ENCODE measurements at regions of chr2 and their contacts with region 1.

Region 1: DNA sequence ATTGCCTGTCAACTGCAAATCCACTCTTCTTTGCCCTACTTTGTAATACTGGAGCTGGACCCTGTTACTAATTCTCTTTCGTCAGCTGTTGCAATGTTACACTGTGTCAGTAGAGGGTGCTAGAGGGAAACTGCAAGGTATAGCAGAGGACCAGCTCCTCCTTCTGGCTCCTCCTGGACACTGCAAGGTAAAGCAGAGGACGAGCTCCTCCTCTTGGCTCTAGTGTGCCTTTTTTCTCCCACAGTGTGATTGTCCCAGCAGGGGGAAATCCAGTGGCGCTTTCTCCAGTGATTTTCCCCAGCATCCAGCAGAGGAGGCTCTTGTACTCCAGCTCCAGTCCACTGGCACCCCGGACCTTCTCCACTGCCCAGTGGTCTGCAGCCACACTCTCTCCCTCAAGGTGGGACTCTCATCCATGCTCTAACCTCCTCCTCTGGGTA is 95.6 kb downstream of the CAPN13 start:
- DNase-seq: peak; percentile 91
- H3K4me3 Mint-ChIP-seq: no peak overlapping the region
- H3K27ac Mint-ChIP-seq: no peak overlapping the region
- H3K4me1 Mint-ChIP-seq: peaks cover 9% of the 10 kb centered on the region
- H3K27me3 Mint-ChIP-seq: no peaks in the 10 kb centered on the region
- CTCF ChIP-seq: peak; percentile 100

Region 2: DNA sequence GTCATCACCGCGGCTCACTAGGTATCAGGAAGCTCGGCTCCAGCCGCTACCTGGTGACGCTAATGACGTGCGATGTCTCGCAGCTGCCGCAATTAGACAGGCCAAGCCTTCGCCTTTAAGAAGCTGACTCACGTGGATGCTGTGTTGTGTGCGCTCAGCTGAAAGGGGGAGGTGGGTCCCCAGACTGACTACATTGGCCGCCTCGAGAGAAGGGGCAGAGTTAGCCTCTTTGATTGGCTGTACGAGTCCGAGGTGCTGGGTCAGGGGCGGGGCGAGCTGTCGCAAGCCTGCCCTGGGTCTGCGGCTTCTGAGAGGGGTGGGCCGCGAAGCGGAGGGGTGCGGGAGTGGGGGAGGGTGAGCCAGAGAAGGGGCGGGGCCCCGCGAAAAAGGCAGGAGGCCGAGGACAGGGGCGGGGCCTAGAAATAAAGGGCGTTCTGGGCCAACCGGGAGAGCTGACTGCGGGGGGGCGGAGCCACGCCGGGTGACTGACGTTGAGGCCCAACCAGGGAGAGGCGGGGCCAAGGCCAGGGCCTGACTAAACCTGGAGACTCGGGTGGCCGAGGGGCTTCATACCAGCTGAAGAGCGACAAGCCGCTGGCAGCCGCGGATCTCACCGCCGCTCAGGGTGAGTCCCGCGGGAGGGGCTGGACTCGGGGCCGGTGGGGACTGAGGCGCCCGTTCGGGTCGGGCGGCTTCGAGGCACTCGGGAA is 565.1 kb before region 1 on chr2 and contains the start of gene YPEL5:
- CTCF ChIA-PET with region 1: interaction called, 11 read pairs
- POLR2A ChIA-PET with region 1: no interaction called
- intact Hi-C with region 1: no loop called
- DNase-seq: peak; percentile 99
- H3K4me3 Mint-ChIP-seq: peak within 1 kb of the TSS; percentile 77
- H3K27ac Mint-ChIP-seq: peak within 1 kb of the TSS; percentile 95
- H3K4me1 Mint-ChIP-seq: peaks cover 29% of the 10 kb centered on the region
- H3K27me3 Mint-ChIP-seq: no peaks in the 10 kb centered on the region
- CTCF ChIP-seq: no peak
- total RNA-seq, gene YPEL5: 62.5 and 80.6 TPM in 2 replicates

Region 3: DNA sequence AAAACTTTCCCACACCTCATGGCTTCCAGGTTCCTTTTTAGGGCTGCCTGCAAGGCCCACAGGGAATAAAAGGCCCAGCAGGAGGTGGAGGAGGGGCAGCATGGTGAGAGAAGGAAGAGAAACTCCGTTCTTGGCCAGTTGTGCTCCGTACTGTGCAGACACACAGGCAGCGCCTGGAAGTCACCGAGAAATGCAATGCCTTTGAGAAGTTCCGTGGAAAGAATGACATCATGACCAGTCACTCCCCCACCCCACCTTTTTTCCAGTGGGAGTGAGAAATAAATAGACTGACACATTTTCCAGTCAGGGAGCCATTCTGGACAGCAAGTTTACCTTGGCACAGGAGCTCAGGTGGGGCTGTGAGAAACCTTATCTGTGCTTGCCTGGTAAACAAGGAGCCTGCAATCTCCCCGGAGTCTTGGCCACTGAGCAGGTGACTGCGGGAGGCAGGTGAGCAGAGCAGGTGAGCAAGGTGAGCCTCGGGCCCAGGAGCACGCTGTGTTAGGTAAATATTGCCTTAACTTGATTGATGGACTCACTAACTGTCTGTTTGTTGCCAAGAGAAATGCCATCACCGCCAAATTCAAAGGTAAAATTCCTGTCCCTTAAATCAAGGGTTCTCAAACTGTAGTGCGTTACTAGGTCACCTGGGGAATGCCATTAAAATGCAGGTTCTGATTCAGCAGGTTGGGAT is 493.9 kb before region 1 on chr2:
- CTCF ChIA-PET with region 1: interaction called, 471 read pairs
- POLR2A ChIA-PET with region 1: no interaction called
- intact Hi-C with region 1: no loop called
- DNase-seq: peak; percentile 69
- H3K4me3 Mint-ChIP-seq: no peak overlapping the region
- H3K27ac Mint-ChIP-seq: no peak overlapping the region
- H3K4me1 Mint-ChIP-seq: peaks cover 8% of the 10 kb centered on the region
- H3K27me3 Mint-ChIP-seq: no peaks in the 10 kb centered on the region
- CTCF ChIP-seq: no peak

Region 4: DNA sequence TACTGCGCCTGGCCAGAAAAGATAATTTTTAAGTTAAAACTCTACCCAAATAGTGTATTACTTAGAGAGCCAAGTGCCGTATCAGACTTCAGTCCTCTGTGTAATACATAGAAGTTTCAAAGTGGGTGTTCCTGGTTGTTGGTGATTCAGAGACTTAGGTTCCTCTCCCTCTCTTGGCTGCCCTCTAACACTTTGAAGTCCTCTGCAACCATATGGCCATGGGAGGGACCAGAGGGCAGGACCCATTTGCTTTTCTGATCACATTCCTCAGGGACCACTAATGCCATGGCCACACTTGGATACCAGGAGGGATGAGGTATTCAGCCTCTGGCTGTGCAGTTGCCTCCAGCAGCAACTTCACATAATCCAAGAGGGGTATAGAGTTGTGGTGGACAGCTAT is 35.9 kb before region 1 on chr2:
- CTCF ChIA-PET with region 1: no interaction called
- POLR2A ChIA-PET with region 1: no interaction called
- intact Hi-C with region 1: no loop called
- DNase-seq: no peak
- H3K4me3 Mint-ChIP-seq: no peak overlapping the region
- H3K27ac Mint-ChIP-seq: no peak overlapping the region
- H3K4me1 Mint-ChIP-seq: no peaks in the 10 kb centered on the region
- H3K27me3 Mint-ChIP-seq: no peaks in the 10 kb centered on the region
- CTCF ChIP-seq: no peak

Region 5: DNA sequence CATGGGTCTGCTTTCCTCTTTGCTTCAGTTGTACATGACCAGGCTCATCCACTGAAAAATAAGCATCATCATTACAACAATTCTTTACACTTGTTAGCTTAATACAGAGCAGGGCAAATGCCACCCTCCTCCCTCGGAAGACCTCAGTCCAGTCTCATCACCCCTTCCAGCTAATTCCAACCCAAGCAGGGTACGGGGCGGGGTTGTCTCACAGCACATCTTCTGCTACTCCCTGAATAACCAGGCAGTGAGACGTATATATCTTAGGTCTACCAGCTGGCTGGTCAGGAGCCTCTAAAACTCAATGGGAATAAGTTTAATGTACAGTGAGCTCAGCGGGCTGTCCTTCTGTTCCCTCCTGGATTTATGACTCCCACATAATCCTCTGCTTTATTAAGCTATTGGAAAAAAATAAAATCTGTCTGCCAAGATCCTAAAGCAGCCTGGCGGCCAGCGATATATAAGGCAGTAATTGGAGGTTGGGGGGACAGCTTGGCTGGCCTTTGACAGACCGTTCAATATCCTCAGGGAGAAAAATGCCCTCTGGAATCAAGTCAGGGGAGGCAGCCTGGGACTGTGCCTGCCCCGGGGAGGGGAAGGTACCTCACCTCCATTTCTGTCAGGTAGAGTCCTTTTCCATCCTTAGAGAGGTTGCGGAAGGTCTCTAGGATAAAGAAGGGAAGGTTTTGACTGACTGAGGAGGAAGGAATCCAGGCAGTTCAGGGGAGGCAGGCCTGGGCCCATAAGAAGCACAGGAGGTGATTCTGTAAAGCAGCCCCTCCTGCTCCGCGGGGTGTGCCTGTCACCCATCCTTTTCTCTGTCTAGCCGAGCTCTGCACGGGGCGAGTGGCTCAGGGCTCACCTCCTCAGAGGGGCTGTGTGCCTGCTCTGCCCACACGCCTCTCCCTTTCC is 19.3 kb after region 1 on chr2:
- CTCF ChIA-PET with region 1: interaction called, 14 read pairs
- POLR2A ChIA-PET with region 1: no interaction called
- intact Hi-C with region 1: no loop called
- DNase-seq: no peak
- H3K4me3 Mint-ChIP-seq: no peak overlapping the region
- H3K27ac Mint-ChIP-seq: no peak overlapping the region
- H3K4me1 Mint-ChIP-seq: no peaks in the 10 kb centered on the region
- H3K27me3 Mint-ChIP-seq: peaks cover 3% of the 10 kb centered on the region
- CTCF ChIP-seq: no peak

Region 6: GRCh38 chr2:31333527-31334183 is 622.0 kb after region 1 on chr2:
- CTCF ChIA-PET with region 1: interaction called, 139 read pairs
- POLR2A ChIA-PET with region 1: no interaction called
- intact Hi-C with region 1: loop called (anchors 1 kb)
- DNase-seq: peak; percentile 83
- H3K4me3 Mint-ChIP-seq: no peak overlapping the region
- H3K27ac Mint-ChIP-seq: no peak overlapping the region
- H3K4me1 Mint-ChIP-seq: peaks cover 31% of the 10 kb centered on the region
- H3K27me3 Mint-ChIP-seq: no peaks in the 10 kb centered on the region
- CTCF ChIP-seq: peak; percentile 96

Region 7: GRCh38 chr2:31729764-31730092 is 1018.1 kb after region 1 on chr2:
- CTCF ChIA-PET with region 1: interaction called, 9 read pairs
- POLR2A ChIA-PET with region 1: no interaction called
- intact Hi-C with region 1: loop called (anchors 1 kb)
- DNase-seq: peak; percentile 68
- H3K4me3 Mint-ChIP-seq: no peak overlapping the region
- H3K27ac Mint-ChIP-seq: no peak overlapping the region
- H3K4me1 Mint-ChIP-seq: no peaks in the 10 kb centered on the region
- H3K27me3 Mint-ChIP-seq: no peaks in the 10 kb centered on the region
- CTCF ChIP-seq: peak; percentile 65